ENCODE measurements at regions of chr5 and their contacts with region 1.

Region 1: GRCh38 chr5:57085306-57086081 is 88.4 kb upstream of the GPBP1 start:
- DNase-seq: no peak
- H3K4me3 ChIP-seq: no peak overlapping the region
- H3K27ac ChIP-seq: no peak overlapping the region
- H3K4me1 ChIP-seq: no peaks in the 10 kb centered on the region
- H3K27me3 ChIP-seq: no peaks in the 10 kb centered on the region
- CTCF ChIP-seq: no peak
- POLR2A ChIP-seq: no peak

Region 2: DNA sequence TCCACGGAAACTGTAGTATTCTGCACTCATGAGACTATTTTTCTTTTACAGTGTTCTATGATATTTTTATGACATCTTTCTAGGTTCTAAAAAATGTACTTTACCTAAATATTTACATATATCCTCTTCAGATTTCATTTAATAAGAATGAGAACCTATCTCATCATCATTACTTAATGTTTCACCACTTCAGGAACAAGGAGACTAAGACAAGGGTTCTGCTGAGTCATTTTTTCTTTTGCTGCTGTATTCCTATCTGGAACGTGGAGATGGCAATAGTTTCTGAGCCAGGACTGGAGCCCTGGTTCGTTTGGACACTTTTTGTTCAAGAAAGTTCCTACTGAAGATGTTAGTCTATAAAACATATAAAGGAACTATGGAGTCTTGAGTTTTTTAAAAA is 528.3 kb before region 1 on chr5:
- intact Hi-C with region 1: loop called (anchors 5 kb)
- DNase-seq: no peak
- H3K4me3 ChIP-seq: no peak overlapping the region
- H3K27ac ChIP-seq: no peak overlapping the region
- H3K4me1 ChIP-seq: no peaks in the 10 kb centered on the region
- H3K27me3 ChIP-seq: no peaks in the 10 kb centered on the region
- CTCF ChIP-seq: no peak
- POLR2A ChIP-seq: no peak